ENCODE measurements at regions of chr1 and their contacts with region 1.

Region 1: DNA sequence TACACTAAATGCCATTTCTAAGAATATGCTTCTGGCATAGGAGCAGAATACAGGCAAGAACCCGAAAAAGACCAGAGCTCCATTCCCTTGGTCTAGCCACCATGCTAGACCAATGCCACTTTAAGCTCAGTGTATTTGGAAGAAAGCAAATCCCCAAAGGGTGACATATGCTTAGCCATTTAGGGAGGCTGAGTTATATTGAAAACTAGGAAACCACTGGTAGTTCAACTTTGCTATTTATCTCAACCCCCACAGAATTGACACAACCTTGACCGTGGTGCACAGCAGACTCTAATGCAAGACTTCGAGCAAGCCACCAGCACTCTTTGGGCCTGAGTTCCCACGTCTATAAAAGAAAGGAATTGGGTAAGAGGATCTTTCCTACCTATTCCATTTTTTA is 167.9 kb downstream of the ADSS2 start:
- DNase-seq: no peak
- ATAC-seq: no peak
- H3K4me3 Mint-ChIP-seq: no peak overlapping the region
- H3K27ac Mint-ChIP-seq: no peak overlapping the region
- H3K4me1 Mint-ChIP-seq: no peaks in the 10 kb centered on the region
- H3K27me3 Mint-ChIP-seq: no peaks in the 10 kb centered on the region
- CTCF ChIP-seq: no peak

Region 2: GRCh38 chr1:244302889-244303613 is 19.3 kb after region 1 on chr1:
- CTCF ChIA-PET with region 1: interaction called, 32 read pairs
- POLR2A ChIA-PET with region 1: no interaction called
- intact Hi-C with region 1: no loop called
- DNase-seq: no peak
- ATAC-seq: no peak
- H3K4me3 Mint-ChIP-seq: no peak overlapping the region
- H3K27ac Mint-ChIP-seq: no peak overlapping the region
- H3K4me1 Mint-ChIP-seq: peaks cover 5% of the 10 kb centered on the region
- H3K27me3 Mint-ChIP-seq: no peaks in the 10 kb centered on the region
- CTCF ChIP-seq: no peak